Calu3 (cell line): ENCODE measurements at regions of chr6 and their contacts with region 1.

Region 1: GRCh38 chr6:162512744-162513143 is 214.8 kb downstream of the PRKN start:
- DNase-seq: no peak
- H3K4me3 Mint-ChIP-seq: no peak overlapping the region
- H3K27ac Mint-ChIP-seq: no peak overlapping the region
- H3K4me1 Mint-ChIP-seq: no peaks in the 10 kb centered on the region
- H3K27me3 Mint-ChIP-seq: no peaks in the 10 kb centered on the region
- CTCF ChIP-seq: no peak

Region 2: DNA sequence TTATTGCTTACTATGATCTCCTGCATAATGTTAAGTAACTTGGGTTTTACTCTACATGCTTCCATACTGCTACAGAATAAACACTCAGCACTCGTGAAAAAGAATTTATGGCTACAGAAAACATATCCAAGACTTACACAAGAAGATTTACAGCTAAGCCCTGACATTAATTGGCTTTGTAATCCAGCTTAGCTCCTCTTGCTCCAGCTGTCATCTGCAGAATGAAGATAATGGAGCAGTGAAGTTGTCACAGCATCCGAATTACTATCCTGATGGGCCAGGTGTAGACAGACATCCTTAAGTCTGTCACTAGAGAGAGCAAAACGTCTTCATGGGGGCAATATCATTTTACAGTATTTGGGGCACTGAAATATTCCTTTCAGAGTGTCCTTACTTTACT is 59.5 kb after region 1 on chr6:
- CTCF ChIA-PET with region 1: no interaction called
- intact Hi-C with region 1: loop called (anchors 10 kb)
- DNase-seq: no peak
- H3K4me3 Mint-ChIP-seq: no peak overlapping the region
- H3K27ac Mint-ChIP-seq: no peak overlapping the region
- H3K4me1 Mint-ChIP-seq: no peaks in the 10 kb centered on the region
- H3K27me3 Mint-ChIP-seq: no peaks in the 10 kb centered on the region
- CTCF ChIP-seq: no peak